CD4-positive, alpha-beta memory T cell (primary cell): ENCODE measurements at regions of chr18 and their contacts with region 1.

Region 1: DNA sequence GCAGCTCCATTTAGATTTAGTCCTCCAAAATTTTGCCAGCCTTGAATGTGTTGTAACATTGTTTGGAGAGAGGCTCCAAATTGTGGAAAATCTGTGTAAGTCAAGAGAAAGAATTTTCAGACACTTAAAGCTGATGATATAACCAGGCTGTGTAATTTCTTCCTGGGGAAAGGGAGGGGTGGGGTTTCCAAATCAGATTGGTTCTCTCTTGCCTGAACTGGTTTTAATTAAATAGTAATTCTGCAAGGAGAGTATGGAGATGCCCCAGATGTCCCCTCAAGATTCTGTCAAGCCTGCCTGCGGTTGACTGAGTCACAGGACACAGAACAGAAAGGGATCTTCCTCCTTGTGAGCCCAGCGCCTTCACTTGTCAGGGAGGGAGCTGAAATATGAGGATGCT is 54.5 kb downstream of the C18orf63 start:
- DNase-seq: no peak
- H3K4me3 ChIP-seq: no peak overlapping the region
- H3K4me3 Mint-ChIP-seq: no peak overlapping the region
- H3K27ac ChIP-seq: no peak overlapping the region
- H3K27ac Mint-ChIP-seq: peak overlapping the region in 5 of 7 donors; percentile 25 to 89 (median 77)
- H3K4me1 ChIP-seq: peaks cover 34% of the 10 kb centered on the region
- H3K4me1 Mint-ChIP-seq: peaks cover 29 to 49% (median 39%) of the 10 kb centered on the region in 4 donors
- H3K27me3 ChIP-seq: no peaks in the 10 kb centered on the region
- H3K27me3 Mint-ChIP-seq: peaks cover 7 to 8% of the 10 kb centered on the region in 2 donors

Region 2: DNA sequence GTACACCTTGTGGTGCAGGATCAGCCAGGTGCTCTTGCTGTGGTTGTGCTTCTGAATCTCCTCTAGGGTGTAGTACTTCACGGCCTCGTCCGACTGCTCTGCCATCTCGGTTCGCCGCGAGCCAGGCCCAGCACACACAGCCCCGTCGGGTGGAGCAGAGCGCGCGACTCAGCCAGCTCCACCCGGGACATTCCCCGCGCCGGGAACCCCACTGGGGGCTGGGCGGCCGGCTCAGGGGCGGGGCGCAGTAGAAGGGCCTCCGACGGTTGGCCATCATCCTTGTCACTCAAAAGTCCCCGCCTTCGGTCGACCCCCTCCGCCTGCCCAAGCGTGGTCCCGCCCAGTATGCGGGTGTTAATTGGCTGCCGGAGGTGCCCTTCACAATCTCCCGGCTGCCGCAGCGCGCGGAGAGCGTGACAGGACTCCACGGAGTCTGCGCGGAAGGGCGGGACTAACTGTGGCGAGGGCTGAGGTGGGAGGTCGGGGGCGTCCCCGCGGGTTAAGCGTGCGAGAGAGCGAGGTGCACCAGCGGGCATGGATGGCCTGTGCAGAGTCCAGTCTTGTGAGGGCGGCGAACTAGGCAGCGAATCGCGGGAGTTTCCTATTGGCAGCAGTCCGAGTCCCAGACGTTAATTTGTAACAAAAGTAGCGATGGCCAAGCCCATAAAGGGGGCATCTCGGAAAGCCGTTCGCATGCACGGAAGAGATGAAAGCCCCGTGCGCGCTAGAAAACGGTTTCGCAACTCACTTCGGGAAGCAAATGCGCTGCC is 78.2 kb before region 1 on chr18 and contains the start of gene CYB5A:
- CTCF ChIA-PET with region 1: no interaction called
- POLR2A ChIA-PET with region 1: no interaction called
- intact Hi-C with region 1: loop called (anchors 5 kb)
- DNase-seq: peak; percentile 97 to 99 (median 98)
- H3K4me3 ChIP-seq: peak within 1 kb of the TSS; percentile 90 to 98
- H3K4me3 Mint-ChIP-seq: peak within 1 kb of the TSS in 3 of 8 donors; percentile 95 to 99 (median 96)
- H3K27ac ChIP-seq: peak within 1 kb of the TSS; percentile 74
- H3K27ac Mint-ChIP-seq: peak within 1 kb of the TSS; percentile 65 to 98 (median 88)
- H3K4me1 ChIP-seq: peaks cover 13% of the 10 kb centered on the region
- H3K4me1 Mint-ChIP-seq: peaks cover 6 to 20% (median 11%) of the 10 kb centered on the region in 4 donors
- H3K27me3 ChIP-seq: no peaks in the 10 kb centered on the region
- H3K27me3 Mint-ChIP-seq: no peaks in the 10 kb centered on the region
- total RNA-seq, gene CYB5A: 22.8 to 27.0 TPM

Region 3: DNA sequence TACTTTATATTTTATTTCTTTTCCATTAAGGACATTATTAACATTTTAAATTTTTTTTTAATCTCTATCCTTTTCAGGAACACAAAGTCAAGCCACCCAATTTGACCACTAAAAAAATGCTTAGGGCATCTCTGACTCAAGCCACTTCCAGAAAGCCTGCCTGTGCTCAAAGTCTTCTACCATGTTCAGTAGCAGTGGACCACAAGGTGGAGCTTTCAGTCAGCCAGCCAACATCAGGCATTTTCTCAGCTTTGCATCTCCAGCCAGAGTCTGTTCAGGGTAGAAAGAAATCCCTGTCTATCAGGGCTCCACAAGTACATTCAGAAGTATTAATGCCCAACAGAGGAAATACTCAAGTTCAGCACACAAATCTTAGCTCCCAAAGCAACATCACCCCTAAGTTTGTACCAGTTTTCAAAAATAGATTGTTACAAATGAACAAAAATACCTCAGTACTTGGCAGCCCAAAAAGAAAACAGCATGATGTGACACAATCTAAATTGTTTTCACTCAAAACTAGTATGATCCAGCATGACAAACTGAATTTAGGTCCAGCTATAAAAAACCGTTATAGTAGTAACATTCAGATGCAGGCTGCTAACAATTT is 16.8 kb before region 1 on chr18:
- CTCF ChIA-PET with region 1: interaction called, 37 read pairs
- POLR2A ChIA-PET with region 1: interaction called, 27 read pairs
- intact Hi-C with region 1: loop called (anchors 1 kb)
- DNase-seq: peak; percentile 66 to 69 (median 67)
- H3K4me3 ChIP-seq: no peak overlapping the region
- H3K4me3 Mint-ChIP-seq: no peak overlapping the region
- H3K27ac ChIP-seq: no peak overlapping the region
- H3K27ac Mint-ChIP-seq: peak overlapping the region in 2 of 7 donors; percentile 11 to 58
- H3K4me1 ChIP-seq: peaks cover 9% of the 10 kb centered on the region
- H3K4me1 Mint-ChIP-seq: peaks cover 0 to 7% (median 5%) of the 10 kb centered on the region in 4 donors
- H3K27me3 ChIP-seq: no peaks in the 10 kb centered on the region
- H3K27me3 Mint-ChIP-seq: peaks cover 0 to 9% of the 10 kb centered on the region in 2 donors